ENCODE measurements at regions of chr6 and their contacts with region 1.

Region 1: DNA sequence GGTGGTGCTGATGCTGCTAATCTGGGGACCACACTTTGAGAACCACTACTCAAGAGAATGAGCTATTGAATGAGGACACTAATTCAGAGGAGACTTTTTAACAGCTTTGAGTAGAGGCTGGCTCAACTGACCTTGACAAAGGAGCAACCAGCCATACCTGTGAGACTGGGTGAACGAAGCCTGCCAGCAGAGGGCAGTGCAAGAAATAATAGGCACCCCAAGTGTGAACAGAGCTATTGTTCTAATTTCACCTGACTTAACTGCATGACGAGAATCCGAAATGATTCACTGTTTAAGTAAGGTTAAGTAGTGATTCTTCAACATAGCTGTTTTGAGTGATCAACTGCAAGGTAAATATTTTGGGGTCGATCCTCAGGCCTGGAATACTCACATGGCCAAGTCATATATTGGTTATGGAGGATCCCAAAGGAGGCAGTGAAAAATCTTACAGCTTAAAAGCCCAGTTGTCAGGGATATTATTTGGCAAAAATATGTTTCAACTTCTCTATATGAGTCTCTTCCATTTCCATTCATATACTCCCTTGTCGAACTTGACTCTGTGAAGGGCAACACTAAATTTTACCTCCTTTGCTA is 550.5 kb upstream of the MARCKS start:
- DNase-seq: peak; percentile 81
- H3K4me3 Mint-ChIP-seq: no peak overlapping the region
- H3K27ac Mint-ChIP-seq: no peak overlapping the region
- H3K4me1 Mint-ChIP-seq: no peaks in the 10 kb centered on the region
- H3K27me3 Mint-ChIP-seq: no peaks in the 10 kb centered on the region
- CTCF ChIP-seq: peak; percentile 77

Region 2: DNA sequence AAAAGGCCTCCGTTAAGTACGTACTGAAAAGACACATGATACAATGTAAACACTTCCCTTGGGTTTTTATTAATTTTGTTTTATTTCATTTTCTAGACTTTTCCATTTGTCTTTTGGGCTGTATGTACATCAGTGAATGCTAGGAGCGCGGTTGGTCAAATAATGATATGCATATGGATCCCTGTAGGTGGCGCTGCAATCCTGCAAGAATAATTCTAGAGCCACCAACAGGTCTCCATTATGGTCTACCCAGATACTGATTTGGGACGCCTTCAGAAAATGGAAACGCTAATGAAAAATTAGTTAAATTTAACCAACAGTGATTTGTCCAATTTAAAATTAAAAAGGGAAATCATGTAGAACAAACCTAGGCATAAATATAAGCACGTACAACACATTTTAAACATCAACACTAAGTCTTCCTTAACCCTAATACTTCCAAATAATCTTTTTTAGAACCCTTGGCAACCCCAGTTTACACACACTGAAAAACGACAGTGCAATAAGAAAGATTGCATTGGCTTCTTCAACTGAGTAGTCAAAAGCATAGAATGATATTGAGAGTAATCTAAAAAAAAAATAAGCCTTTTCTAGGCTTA is 526.1 kb before region 1 on chr6:
- CTCF ChIA-PET with region 1: interaction called, 4 read pairs
- intact Hi-C with region 1: loop called (anchors 2 kb)
- DNase-seq: peak; percentile 76
- H3K4me3 Mint-ChIP-seq: no peak overlapping the region
- H3K27ac Mint-ChIP-seq: no peak overlapping the region
- H3K4me1 Mint-ChIP-seq: no peaks in the 10 kb centered on the region
- H3K27me3 Mint-ChIP-seq: no peaks in the 10 kb centered on the region
- CTCF ChIP-seq: peak; percentile 73

Region 3: DNA sequence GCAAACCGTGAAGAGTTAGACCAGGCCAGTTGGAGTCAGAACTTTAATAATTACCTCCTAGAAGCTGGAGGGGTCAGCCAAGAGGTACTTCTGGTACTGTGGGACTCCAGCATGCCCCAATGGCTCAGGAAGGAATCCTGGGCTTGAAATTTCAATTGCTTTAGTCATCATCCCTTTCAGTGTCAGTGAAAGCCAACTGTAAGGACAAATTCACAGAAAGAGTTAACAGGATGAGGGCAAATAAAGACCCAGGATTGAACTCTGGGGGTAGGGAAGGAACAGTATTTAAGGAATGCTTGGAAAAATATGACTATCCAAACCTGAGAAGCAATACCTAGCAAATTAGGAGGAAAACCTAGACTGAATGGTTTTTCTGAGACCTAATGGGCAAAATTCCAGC is 184.6 kb before region 1 on chr6:
- CTCF ChIA-PET with region 1: no interaction called
- intact Hi-C with region 1: loop called (anchors 2 kb)
- DNase-seq: peak; percentile 44
- H3K4me3 Mint-ChIP-seq: no peak overlapping the region
- H3K27ac Mint-ChIP-seq: peak overlapping the region; percentile 10
- H3K4me1 Mint-ChIP-seq: peaks cover 30% of the 10 kb centered on the region
- H3K27me3 Mint-ChIP-seq: no peaks in the 10 kb centered on the region
- CTCF ChIP-seq: no peak

Region 4: GRCh38 chr6:113281014-113281413 is 25.6 kb before region 1 on chr6:
- CTCF ChIA-PET with region 1: no interaction called
- intact Hi-C with region 1: no loop called
- DNase-seq: no peak
- H3K4me3 Mint-ChIP-seq: no peak overlapping the region
- H3K27ac Mint-ChIP-seq: no peak overlapping the region
- H3K4me1 Mint-ChIP-seq: no peaks in the 10 kb centered on the region
- H3K27me3 Mint-ChIP-seq: no peaks in the 10 kb centered on the region
- CTCF ChIP-seq: no peak

Region 5: DNA sequence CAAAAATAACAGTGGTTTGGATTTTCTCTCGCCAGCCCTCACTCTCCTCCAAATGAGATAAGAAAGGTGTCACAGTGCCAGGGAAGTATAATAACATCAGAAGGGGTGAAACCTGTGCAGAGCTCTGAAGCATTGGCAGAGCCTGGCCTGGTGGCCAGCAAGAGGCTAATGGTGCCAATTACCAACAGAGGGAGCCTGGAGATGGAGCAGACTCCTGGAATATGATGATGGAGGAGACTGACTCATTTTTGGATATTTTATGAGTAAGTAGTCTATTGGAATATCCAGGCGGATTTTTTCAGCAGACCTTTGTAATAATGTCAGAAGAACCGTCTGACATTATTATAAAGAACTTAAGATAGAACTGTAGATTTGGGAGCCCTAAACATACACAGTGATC is 107.9 kb after region 1 on chr6:
- CTCF ChIA-PET with region 1: interaction called, 6 read pairs
- intact Hi-C with region 1: loop called (anchors 1 kb)
- DNase-seq: peak; percentile 56
- H3K4me3 Mint-ChIP-seq: no peak overlapping the region
- H3K27ac Mint-ChIP-seq: peak overlapping the region; percentile 1
- H3K4me1 Mint-ChIP-seq: peaks cover 34% of the 10 kb centered on the region
- H3K27me3 Mint-ChIP-seq: no peaks in the 10 kb centered on the region
- CTCF ChIP-seq: peak; percentile 49

Region 6: GRCh38 chr6:113879186-113880096 is 572.8 kb after region 1 on chr6:
- CTCF ChIA-PET with region 1: interaction called, 17 read pairs
- intact Hi-C with region 1: loop called (anchors 5 kb)
- DNase-seq: peak; percentile 54
- H3K4me3 Mint-ChIP-seq: no peak overlapping the region
- H3K27ac Mint-ChIP-seq: no peak overlapping the region
- H3K4me1 Mint-ChIP-seq: peaks cover 16% of the 10 kb centered on the region
- H3K27me3 Mint-ChIP-seq: no peaks in the 10 kb centered on the region
- CTCF ChIP-seq: peak; percentile 55

Measured in Calu3 (cell line).